ENCODE measurements at regions of chr7 and their contacts with region 1.

Region 1: GRCh38 chr7:76008156-76008687 is 13.8 kb upstream of the TMEM120A start:
- DNase-seq: no peak
- H3K4me3 Mint-ChIP-seq: peak overlapping the region; percentile 20
- H3K27ac Mint-ChIP-seq: peak overlapping the region; percentile 91
- H3K4me1 Mint-ChIP-seq: peaks cover 36% of the 10 kb centered on the region
- H3K27me3 Mint-ChIP-seq: no peaks in the 10 kb centered on the region

Region 2: GRCh38 chr7:75599244-75599781 is 408.9 kb before region 1 on chr7:
- intact Hi-C with region 1: loop called (anchors 2 kb)
- DNase-seq: no peak
- H3K4me3 Mint-ChIP-seq: no peak overlapping the region
- H3K27ac Mint-ChIP-seq: no peak overlapping the region
- H3K4me1 Mint-ChIP-seq: peaks cover 23% of the 10 kb centered on the region
- H3K27me3 Mint-ChIP-seq: no peaks in the 10 kb centered on the region

Region 3: DNA sequence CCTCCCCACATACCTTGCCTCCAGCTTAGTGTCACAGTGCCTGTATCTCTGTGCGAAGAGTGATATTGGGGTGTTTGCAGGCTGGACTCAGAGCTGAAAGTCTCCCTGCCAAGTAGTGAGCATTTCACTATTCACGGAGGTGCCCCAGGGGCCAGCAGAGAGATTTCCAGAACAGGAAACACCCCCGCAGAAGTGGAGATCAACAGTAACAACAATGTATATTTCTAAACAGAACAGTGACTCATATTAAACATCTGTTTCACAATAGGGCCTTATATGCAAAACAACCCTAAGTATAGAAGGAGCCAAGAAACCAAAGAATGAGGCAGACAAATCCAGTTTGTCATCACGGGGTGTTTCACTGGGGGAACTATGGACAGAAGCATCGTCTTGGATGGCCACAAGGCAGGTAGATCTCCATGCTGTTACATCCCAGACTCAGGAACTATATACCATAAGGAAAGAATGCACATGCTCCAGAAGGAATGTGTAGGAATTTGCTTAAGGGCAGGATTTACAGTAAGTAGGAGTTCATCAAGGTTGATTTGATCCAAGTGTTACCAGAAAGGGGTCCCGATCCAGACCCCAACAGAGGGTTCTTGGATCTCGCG is 165.3 kb before region 1 on chr7:
- intact Hi-C with region 1: loop called (anchors 1 kb)
- DNase-seq: no peak
- H3K4me3 Mint-ChIP-seq: peak overlapping the region; percentile 62
- H3K27ac Mint-ChIP-seq: peak overlapping the region; percentile 97
- H3K4me1 Mint-ChIP-seq: peaks cover 14% of the 10 kb centered on the region
- H3K27me3 Mint-ChIP-seq: no peaks in the 10 kb centered on the region

Region 4: DNA sequence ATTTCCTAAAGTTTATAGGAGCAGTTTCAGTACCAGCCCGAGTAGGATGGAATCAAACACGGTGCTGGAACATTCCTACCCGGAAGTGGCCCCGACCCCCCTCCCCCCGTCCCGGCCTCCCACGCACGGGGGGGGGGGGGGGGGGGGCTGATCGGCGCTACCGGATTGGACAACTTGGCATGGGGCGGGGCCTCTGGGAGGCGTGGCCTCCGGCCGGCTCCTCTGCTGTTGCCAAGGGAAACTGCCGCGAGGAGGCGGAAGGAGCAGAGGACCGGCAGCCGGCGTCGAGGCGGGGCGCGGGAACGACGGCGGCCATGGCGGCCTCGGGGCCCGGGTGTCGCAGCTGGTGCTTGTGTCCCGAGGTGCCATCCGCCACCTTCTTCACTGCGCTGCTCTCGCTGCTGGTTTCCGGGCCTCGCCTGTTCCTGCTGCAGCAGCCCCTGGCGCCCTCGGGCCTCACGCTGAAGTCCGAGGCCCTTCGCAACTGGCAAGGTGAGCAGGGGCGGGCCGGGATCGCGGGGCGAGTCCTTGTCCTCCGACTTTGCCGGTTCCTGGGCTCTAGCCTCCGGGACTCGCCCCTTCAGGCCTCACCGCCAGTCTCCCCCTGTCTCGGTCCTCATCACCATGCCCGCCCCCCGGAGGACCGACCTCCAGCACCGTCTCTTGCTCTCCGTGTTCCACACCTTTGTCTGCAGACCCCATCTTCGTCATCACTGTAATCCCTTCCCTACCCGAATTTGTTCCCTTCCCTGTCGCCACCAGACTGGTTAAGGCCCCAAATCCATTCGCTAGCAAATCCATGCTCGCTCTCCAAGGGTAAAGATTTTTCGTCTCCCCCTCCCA is 129.2 kb before region 1 on chr7 and contains the start of gene RHBDD2:
- intact Hi-C with region 1: loop called (anchors 1 kb)
- DNase-seq: peak; percentile 89
- H3K4me3 Mint-ChIP-seq: peak within 1 kb of the TSS; percentile 100
- H3K27ac Mint-ChIP-seq: peak within 1 kb of the TSS; percentile 99
- H3K4me1 Mint-ChIP-seq: peaks cover 39% of the 10 kb centered on the region
- H3K27me3 Mint-ChIP-seq: no peaks in the 10 kb centered on the region
- total RNA-seq, gene RHBDD2: 139 and 143 TPM in 2 replicates

Region 5: GRCh38 chr7:75994388-75995051 is 13.7 kb before region 1 on chr7 and contains the start of gene TMEM120A:
- intact Hi-C with region 1: loop called (anchors 1 kb)
- DNase-seq: peak; percentile 91
- H3K4me3 Mint-ChIP-seq: peak within 1 kb of the TSS; percentile 80
- H3K27ac Mint-ChIP-seq: no peak within 1 kb of the TSS
- H3K4me1 Mint-ChIP-seq: peaks cover 29% of the 10 kb centered on the region
- H3K27me3 Mint-ChIP-seq: no peaks in the 10 kb centered on the region
- total RNA-seq, gene TMEM120A: 62.4 and 63.7 TPM in 2 replicates

Region 6: GRCh38 chr7:76047811-76048667 is 39.8 kb after region 1 on chr7 and contains the starts of genes MDH2 and STYXL1:
- intact Hi-C with region 1: loop called (anchors 5 kb)
- DNase-seq: peak; percentile 88
- H3K4me3 Mint-ChIP-seq: peak within 1 kb of the TSS; percentile 99
- H3K27ac Mint-ChIP-seq: peak within 1 kb of the TSS; percentile 97
- H3K4me1 Mint-ChIP-seq: peaks cover 35% of the 10 kb centered on the region
- H3K27me3 Mint-ChIP-seq: no peaks in the 10 kb centered on the region
- total RNA-seq, gene MDH2: 268 and 285 TPM in 2 replicates
- total RNA-seq, gene STYXL1: 27.7 and 36.1 TPM in 2 replicates

Measured in activated T-helper 2 cell treated with anti-CD3 and anti-CD28 coated beads, Interferon-gamma antibody, Interleukin-2, Interleukin-4, amounts not matched to agents 10 μg/mL and 5 μg/mL and 100 μg/mL, durations not matched to agents 14 hours and 24 hours and 36 hours (primary cell).